Activated B cell treated with CpG ODN at 0.5 μM for 24 hours (primary cell): ENCODE measurements at regions of chr17 and their contacts with region 1.

Region 1: DNA sequence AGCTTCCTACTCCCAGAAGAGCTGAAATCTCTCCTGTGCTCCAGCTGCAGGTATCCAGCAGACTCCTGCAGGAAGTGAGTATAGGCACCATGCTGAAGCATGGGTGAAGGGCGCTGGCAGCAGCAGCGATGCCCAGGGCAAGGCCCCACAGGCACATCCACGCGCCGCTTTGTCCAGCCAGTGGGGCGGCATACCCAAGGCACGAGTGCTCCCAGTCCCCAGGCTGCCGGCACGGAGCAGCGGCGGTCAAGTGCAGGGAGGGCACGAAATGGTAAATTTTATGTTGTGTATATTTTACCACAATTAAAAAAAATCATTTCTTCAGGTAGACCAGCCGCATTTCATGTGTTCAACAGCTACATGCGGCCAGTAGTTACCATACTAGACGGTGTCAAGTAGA is 73.1 kb downstream of the HIC1 start:
- DNase-seq: no peak
- ATAC-seq: no peak
- H3K4me3 Mint-ChIP-seq: no peak overlapping the region
- H3K27ac Mint-ChIP-seq: no peak overlapping the region
- H3K4me1 Mint-ChIP-seq: peaks cover 18% of the 10 kb centered on the region
- H3K27me3 Mint-ChIP-seq: no peaks in the 10 kb centered on the region
- CTCF ChIP-seq: no peak

Region 2: DNA sequence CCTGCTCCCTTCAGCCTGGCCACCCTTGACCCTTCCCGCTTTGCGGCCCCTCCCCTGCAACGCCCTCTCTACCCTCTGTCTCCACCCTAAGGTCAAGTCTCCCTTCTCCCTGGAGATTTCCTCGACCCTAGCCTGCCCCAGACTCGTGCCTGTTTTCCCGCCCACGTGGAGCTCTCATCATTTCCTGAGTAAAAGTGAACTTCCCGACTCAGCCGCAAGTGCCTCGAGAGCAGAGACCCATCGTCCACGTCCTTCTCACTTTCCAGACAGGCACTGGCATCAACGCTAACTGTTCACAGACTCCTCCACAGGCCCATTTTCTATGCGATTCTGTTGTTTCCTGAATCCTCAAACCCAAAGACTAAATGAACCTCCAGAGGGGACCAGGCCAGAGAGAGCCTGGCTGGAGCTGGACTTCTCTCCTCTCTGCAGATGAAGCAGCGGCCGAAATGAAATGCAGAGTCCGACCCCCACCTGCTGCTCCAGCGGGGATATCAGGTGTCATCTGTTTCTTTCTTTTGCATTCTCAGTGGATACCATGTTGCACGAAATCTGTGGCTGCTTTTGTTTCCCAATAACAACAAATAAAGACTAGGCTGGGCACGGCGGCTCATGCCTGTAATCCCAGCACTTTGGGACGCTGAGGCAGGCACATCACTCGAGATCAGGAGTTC is 155.4 kb before region 1 on chr17:
- CTCF ChIA-PET with region 1: no interaction called
- POLR2A ChIA-PET with region 1: no interaction called
- intact Hi-C with region 1: no loop called
- DNase-seq: no peak
- ATAC-seq: no peak
- H3K4me3 Mint-ChIP-seq: no peak overlapping the region
- H3K27ac Mint-ChIP-seq: no peak overlapping the region
- H3K4me1 Mint-ChIP-seq: no peaks in the 10 kb centered on the region
- H3K27me3 Mint-ChIP-seq: peaks cover 48% of the 10 kb centered on the region
- CTCF ChIP-seq: no peak

Region 3: DNA sequence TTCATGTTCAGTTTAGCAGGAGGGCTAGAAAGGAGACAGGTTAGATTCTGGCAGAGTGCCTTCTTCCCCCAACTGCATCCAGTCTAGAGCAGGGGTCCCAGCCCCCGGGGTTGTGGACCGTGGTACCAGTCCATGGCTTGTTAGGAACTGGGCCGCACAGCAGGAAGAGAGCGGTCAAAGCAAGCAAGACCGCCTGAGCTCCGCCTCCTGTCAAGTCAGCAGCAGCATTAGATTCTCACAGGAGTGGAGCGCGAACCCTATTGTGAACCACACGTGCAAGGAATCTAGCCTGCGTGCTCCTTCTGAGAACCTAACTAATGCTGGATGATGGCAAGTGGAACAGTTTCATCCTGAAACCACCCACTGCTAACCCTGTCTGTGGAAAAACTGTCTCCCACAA is 21.9 kb after region 1 on chr17:
- CTCF ChIA-PET with region 1: no interaction called
- POLR2A ChIA-PET with region 1: no interaction called
- intact Hi-C with region 1: loop called (anchors 2 kb)
- DNase-seq: no peak
- ATAC-seq: no peak
- H3K4me3 Mint-ChIP-seq: no peak overlapping the region
- H3K27ac Mint-ChIP-seq: no peak overlapping the region
- H3K4me1 Mint-ChIP-seq: peaks cover 5% of the 10 kb centered on the region
- H3K27me3 Mint-ChIP-seq: no peaks in the 10 kb centered on the region
- CTCF ChIP-seq: no peak